ENCODE measurements at regions of chr13 and their contacts with region 1.

Region 1: DNA sequence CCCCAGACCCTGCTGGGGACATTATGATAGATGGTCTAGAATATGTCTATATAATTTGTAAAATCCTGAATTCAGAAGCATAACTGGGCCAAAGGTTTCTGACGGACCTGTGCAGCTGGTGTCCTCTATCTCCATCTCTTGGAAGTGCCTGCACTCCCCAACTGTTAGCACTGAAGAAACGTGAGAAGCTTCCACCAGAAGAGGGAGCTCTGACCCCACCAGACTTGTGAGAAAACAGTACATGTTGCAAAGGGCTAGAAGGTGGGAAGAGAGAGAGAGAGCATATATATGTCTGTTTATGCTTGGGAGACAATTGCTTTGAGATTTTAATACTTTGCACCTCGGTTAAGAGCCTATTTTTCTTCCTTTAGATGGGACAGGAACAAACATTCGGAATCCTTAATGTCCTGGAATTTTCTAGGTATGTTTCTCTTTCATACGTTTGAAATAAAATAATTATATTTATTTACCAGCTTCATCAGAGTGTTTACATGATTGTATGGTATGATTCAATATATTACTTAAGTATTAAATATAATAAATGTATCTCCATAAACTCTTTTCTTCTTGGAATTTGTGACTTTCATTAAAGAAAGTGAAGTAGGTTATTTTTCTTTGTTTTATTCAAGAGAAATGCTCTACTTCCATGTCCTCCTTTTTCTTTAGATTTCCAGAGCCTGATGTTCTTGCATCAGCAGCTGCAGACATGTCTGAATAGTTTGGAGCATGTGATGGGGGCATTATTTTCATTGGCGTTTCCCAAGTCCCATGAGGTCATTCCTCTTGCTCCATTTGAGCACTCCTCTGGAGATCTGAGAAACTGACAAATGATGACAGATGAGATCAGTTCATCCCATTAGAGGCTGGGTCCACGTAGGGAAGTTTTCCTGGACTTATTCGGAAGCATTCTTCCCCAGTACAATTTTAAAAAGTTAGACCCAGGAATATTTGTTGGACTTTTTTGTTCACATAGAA is 202.9 kb downstream of the ATP8A2 start:
- DNase-seq: peak; percentile 39 to 47
- H3K4me3 ChIP-seq: no peak overlapping the region
- H3K27ac ChIP-seq: no peak overlapping the region
- H3K4me1 ChIP-seq: no peaks in the 10 kb centered on the region
- H3K27me3 ChIP-seq: peaks cover 63% of the 10 kb centered on the region
- CTCF ChIP-seq: peak; percentile 84

Region 2: GRCh38 chr13:25662516-25662915 is 87.8 kb after region 1 on chr13:
- CTCF ChIA-PET with region 1: no interaction called
- POLR2A ChIA-PET with region 1: no interaction called
- intact Hi-C with region 1: no loop called
- DNase-seq: no peak
- H3K4me3 ChIP-seq: no peak overlapping the region
- H3K27ac ChIP-seq: no peak overlapping the region
- H3K4me1 ChIP-seq: no peaks in the 10 kb centered on the region
- H3K27me3 ChIP-seq: peaks cover 68% of the 10 kb centered on the region
- CTCF ChIP-seq: no peak

Region 3: DNA sequence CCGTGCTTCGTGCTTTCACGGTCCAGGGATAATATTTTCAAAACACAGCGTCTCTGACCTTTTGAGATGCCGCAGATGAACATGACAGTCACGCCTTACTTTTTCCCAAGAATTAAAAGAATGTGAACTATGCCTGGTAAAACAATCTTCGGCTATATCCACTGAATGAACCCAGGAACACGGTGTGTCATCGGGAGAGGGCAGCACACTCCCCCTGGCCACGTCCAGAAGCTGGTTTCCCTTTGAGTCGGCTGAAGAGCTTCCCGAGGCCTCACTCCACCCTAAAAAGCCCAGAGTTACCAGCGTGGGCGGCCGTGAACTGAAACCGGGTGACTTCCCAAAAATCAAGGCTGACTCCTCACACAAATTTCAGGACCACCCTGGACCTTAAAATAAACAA is 500.0 kb after region 1 on chr13:
- CTCF ChIA-PET with region 1: no interaction called
- POLR2A ChIA-PET with region 1: no interaction called
- intact Hi-C with region 1: loop called (anchors 5 kb)
- DNase-seq: peak in 1 of 2 experiments; percentile 0
- H3K4me3 ChIP-seq: no peak overlapping the region
- H3K27ac ChIP-seq: no peak overlapping the region
- H3K4me1 ChIP-seq: no peaks in the 10 kb centered on the region
- H3K27me3 ChIP-seq: peaks cover 39% of the 10 kb centered on the region
- CTCF ChIP-seq: no peak

Region 4: GRCh38 chr13:26498656-26499591 is 924.2 kb after region 1 on chr13:
- CTCF ChIA-PET with region 1: no interaction called
- POLR2A ChIA-PET with region 1: no interaction called
- intact Hi-C with region 1: loop called (anchors 5 kb)
- DNase-seq: peak; percentile 33 to 46
- H3K4me3 ChIP-seq: no peak overlapping the region
- H3K27ac ChIP-seq: no peak overlapping the region
- H3K4me1 ChIP-seq: no peaks in the 10 kb centered on the region
- H3K27me3 ChIP-seq: no peaks in the 10 kb centered on the region; the same call in 1 of the 2 replicates
- CTCF ChIP-seq: no peak; the same call in 1 of the 2 replicates

Region 5: GRCh38 chr13:26698392-26699196 is 1123.9 kb after region 1 on chr13:
- CTCF ChIA-PET with region 1: interaction called, 5 read pairs
- POLR2A ChIA-PET with region 1: no interaction called
- intact Hi-C with region 1: loop called (anchors 1 kb)
- DNase-seq: peak; percentile 65 to 66
- H3K4me3 ChIP-seq: no peak overlapping the region
- H3K27ac ChIP-seq: no peak overlapping the region
- H3K4me1 ChIP-seq: no peaks in the 10 kb centered on the region
- H3K27me3 ChIP-seq: peaks cover 16% of the 10 kb centered on the region
- CTCF ChIP-seq: peak; percentile 97

Region 6: GRCh38 chr13:26929971-26930730 is 1355.4 kb after region 1 on chr13:
- CTCF ChIA-PET with region 1: no interaction called
- POLR2A ChIA-PET with region 1: no interaction called
- intact Hi-C with region 1: loop called (anchors 2 kb)
- DNase-seq: peak in 1 of 2 experiments; percentile 48
- H3K4me3 ChIP-seq: no peak overlapping the region
- H3K27ac ChIP-seq: no peak overlapping the region
- H3K4me1 ChIP-seq: no peaks in the 10 kb centered on the region
- H3K27me3 ChIP-seq: peaks cover 73% of the 10 kb centered on the region
- CTCF ChIP-seq: peak; percentile 95